Right cardiac atrium (tissue), 5 donors: ENCODE measurements at regions of chr7 and their contacts with region 1.

Region 1: DNA sequence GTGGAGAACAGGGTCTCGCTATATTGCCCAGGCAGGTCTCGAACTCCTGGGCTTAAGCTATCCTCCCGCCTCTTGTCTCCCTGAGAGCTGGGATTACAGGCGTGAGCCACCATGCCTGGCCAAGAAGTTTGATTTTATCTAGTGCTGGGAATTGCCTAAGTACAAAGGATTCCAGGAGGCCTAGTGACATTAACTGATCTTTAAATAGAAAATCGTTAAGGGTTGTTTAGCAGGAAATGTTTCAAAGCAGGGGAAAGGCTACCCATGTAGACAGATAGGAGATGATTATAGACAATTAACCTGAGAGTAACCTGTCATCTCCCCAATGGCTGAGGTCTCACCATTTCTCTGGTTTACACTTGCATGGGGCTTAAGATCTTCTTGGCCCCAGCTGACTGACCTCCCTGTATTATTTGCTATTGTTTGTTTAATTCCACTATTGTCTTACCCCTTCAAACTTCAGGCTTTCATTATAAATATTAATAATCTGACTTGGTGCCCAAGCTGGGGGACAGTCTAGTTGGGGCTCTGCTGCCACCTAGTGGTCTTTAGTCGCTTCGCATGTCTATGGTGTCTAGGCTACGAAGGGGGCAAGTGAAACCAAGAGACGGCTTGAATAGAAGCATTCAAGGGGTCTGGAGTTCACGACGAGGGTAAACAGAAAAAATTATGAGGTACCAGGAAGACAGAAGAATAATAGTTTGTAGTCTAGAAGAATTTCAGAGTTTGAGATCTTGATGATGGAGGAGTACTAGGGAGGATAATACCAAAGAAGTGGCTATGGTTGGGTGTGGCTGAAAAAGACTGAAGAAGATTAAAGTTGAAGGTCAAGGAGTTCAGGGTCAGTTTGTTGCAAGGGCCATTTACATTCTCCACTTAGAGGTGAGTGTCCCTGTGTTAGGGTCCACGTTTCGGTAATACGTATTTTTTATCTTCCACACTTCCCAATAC is 40.4 kb upstream of the BPGM start:
- DNase-seq: peak; percentile 56 to 81 (median 75)
- ATAC-seq: peak; percentile 92 to 93
- H3K4me3 ChIP-seq: no peak overlapping the region
- H3K27ac ChIP-seq: no peak overlapping the region
- H3K4me1 ChIP-seq: no peaks in the 10 kb centered on the region
- H3K27me3 ChIP-seq: no peaks in the 10 kb centered on the region

Region 2: GRCh38 chr7:134432296-134433152 is 173.7 kb before region 1 on chr7:
- intact Hi-C with region 1: loop called (anchors 5 to 10 kb)
- DNase-seq: peak; percentile 91 to 95 (median 93)
- ATAC-seq: peak; percentile 97
- H3K4me3 ChIP-seq: peak overlapping the region; percentile 29
- H3K27ac ChIP-seq: peak overlapping the region; percentile 73
- H3K4me1 ChIP-seq: no peaks in the 10 kb centered on the region
- H3K27me3 ChIP-seq: no peaks in the 10 kb centered on the region

Region 3: DNA sequence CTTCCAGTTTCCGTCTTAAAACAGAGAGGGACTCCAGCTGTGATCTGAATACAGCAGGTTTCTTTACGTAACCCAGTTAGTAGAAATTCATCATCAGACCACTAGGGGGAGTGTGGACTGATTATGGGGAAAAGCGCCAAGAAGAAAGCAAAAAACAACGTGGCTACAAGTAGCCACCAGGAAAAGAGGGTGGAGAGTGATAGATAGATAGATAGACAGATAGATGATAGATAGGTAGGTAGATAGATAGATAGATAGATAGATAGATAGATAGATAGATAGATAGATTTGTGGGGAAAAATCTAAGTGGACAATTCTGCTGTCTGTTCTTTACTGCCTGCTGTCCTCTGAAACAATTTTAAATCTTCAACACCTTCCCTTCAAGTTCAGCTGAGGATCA is 91.6 kb before region 1 on chr7:
- intact Hi-C with region 1: loop called in 3 of 4 experiments (anchors 2 to 10 kb)
- DNase-seq: no peak
- ATAC-seq: peak; percentile 36 to 39
- H3K4me3 ChIP-seq: no peak overlapping the region
- H3K27ac ChIP-seq: no peak overlapping the region
- H3K4me1 ChIP-seq: no peaks in the 10 kb centered on the region
- H3K27me3 ChIP-seq: no peaks in the 10 kb centered on the region

Region 4: DNA sequence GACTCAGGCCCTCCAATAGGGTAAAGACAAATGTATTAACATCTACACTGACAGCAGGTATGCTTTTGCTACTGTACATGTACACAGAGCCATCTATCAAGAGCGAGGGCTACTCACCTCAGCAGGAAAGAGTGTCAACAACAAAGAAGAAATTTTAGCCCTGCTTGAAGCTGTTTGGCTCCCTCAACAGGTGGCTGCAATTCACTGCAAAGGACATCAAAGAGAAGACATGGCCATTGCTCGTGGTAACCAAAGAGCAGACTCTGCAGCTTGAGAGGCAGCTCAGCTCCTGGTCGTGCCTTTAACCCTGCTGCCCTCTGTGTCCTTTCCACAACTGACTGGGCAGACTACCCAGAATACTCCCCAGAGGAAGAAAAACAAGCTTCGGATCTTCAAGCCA is 52.3 kb before region 1 on chr7:
- intact Hi-C with region 1: loop called in 1 of 4 experiments (anchors 10 kb)
- DNase-seq: no peak
- ATAC-seq: no peak
- H3K4me3 ChIP-seq: no peak overlapping the region
- H3K27ac ChIP-seq: no peak overlapping the region
- H3K4me1 ChIP-seq: no peaks in the 10 kb centered on the region
- H3K27me3 ChIP-seq: no peaks in the 10 kb centered on the region

Region 5: GRCh38 chr7:135441791-135442190 is 835.5 kb after region 1 on chr7:
- intact Hi-C with region 1: no loop called
- DNase-seq: no peak
- ATAC-seq: no peak
- H3K4me3 ChIP-seq: no peak overlapping the region
- H3K27ac ChIP-seq: no peak overlapping the region
- H3K4me1 ChIP-seq: peaks cover 1% of the 10 kb centered on the region
- H3K27me3 ChIP-seq: no peaks in the 10 kb centered on the region